Endothelial cell of umbilical vein (primary cell): ENCODE measurements at regions of chr7 and their contacts with region 1.

Region 1: GRCh38 chr7:22110227-22110839 is 164.6 kb upstream of the CDCA7L start:
- DNase-seq: peak; percentile 93
- H3K4me3 ChIP-seq: no peak overlapping the region
- H3K27ac ChIP-seq: peak overlapping the region; percentile 24
- H3K4me1 ChIP-seq: peaks cover 15% of the 10 kb centered on the region
- H3K27me3 ChIP-seq: no peaks in the 10 kb centered on the region
- CTCF ChIP-seq: peak; percentile 65 to 77
- POLR2A ChIP-seq: no peak

Region 2: DNA sequence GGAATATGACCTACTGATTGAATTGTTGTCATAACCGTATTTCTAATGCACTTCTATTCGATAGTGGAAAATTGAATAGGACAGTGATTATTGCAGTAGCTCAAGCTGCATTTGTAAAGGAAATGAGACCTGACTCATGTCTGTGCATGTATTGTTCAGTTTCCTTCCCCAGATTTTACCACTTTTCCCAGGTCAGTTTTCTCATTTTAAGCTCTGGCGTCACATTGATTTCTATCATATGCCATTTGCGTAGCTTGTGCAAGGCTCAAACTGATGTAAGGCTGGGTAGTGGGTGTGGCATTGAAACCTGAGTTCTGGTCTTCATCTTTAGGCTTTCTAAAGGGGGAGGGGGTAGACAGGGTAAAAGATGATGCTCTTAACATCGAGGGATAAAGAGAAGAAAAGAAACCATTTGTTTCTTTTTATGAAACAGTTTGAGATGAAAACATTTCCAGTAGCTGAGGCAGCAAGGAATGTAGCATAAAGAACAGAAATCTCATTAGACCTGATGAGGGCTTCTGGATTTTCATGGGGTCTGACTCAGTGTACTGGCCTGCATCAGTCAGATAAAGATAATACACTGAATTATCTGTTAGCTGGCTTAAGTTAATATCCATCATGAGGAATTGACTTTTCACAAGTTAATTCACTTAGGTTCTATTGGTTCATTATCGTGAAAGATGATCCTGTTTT is 17.6 kb after region 1 on chr7:
- CTCF ChIA-PET with region 1: interaction called, 25 read pairs
- POLR2A ChIA-PET with region 1: interaction called, 4 read pairs
- dilution Hi-C with region 1: no loop called
- intact Hi-C with region 1: loop called (anchors 1 kb)
- DNase-seq: peak; percentile 97
- H3K4me3 ChIP-seq: no peak overlapping the region
- H3K27ac ChIP-seq: peak overlapping the region; percentile 91
- H3K4me1 ChIP-seq: peaks cover 55% of the 10 kb centered on the region
- H3K27me3 ChIP-seq: no peaks in the 10 kb centered on the region
- CTCF ChIP-seq: no peak
- POLR2A ChIP-seq: no peak

Region 3: GRCh38 chr7:22184549-22185199 is 74.3 kb after region 1 on chr7:
- CTCF ChIA-PET with region 1: interaction called, 10 read pairs
- POLR2A ChIA-PET with region 1: no interaction called
- dilution Hi-C with region 1: no loop called
- intact Hi-C with region 1: no loop called
- DNase-seq: no peak
- H3K4me3 ChIP-seq: no peak overlapping the region
- H3K27ac ChIP-seq: no peak overlapping the region
- H3K4me1 ChIP-seq: no peaks in the 10 kb centered on the region
- H3K27me3 ChIP-seq: no peaks in the 10 kb centered on the region
- CTCF ChIP-seq: no peak
- POLR2A ChIP-seq: no peak

Region 4: DNA sequence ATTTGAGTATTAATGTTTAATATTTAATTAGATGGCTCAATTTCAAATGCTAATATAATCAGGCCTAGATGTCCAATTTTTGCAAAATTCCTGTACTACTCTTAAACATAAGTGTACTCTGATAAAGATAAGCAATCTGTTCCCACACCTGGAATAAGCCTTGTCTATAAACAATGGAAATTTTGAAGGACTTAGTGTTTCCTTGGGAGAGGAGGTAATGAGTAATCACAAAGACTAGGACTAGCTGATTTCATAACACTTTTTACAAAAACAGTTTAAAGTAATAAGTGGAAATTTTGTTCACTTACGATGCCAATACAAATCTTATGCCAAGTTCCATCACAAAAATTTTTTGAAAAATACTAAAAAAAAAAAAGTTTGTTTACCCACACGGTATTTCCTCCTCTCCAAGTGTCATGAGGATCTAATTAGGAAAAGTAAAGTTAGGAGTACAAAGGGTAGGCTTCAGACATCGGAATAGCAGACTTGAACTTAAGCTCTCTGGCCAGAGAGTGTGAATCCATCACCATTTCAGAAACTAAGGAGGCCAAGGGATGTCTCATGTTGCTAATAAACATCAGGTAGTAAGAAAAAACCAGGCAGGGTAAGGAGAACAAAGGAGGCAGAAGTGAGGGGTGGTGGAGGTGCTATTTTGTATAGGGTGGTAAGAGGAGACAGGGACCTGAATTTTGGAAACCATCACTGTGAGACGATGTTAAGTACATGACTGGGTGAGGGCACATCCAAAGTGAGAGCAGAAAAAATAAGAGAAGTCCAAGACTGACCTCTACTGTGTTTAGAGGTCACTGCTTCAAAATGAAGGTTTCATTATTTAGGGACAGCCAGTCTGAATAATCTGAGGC is 185.3 kb after region 1 on chr7:
- CTCF ChIA-PET with region 1: interaction called, 88 read pairs
- POLR2A ChIA-PET with region 1: no interaction called
- dilution Hi-C with region 1: no loop called
- intact Hi-C with region 1: loop called (anchors 1 kb)
- DNase-seq: peak; percentile 80
- H3K4me3 ChIP-seq: no peak overlapping the region
- H3K27ac ChIP-seq: peak overlapping the region; percentile 10
- H3K4me1 ChIP-seq: peaks cover 5% of the 10 kb centered on the region
- H3K27me3 ChIP-seq: no peaks in the 10 kb centered on the region
- CTCF ChIP-seq: peak in 1 of 2 donors; percentile 13
- POLR2A ChIP-seq: no peak

Region 5: GRCh38 chr7:22445140-22445743 is 334.9 kb after region 1 on chr7:
- CTCF ChIA-PET with region 1: interaction called, 21 read pairs
- POLR2A ChIA-PET with region 1: no interaction called
- dilution Hi-C with region 1: loop called (anchors 25 kb)
- intact Hi-C with region 1: loop called (anchors 1 kb)
- DNase-seq: peak; percentile 99
- H3K4me3 ChIP-seq: no peak overlapping the region
- H3K27ac ChIP-seq: peak overlapping the region; percentile 92
- H3K4me1 ChIP-seq: peaks cover 50% of the 10 kb centered on the region
- H3K27me3 ChIP-seq: no peaks in the 10 kb centered on the region
- CTCF ChIP-seq: no peak
- POLR2A ChIP-seq: peak; percentile 71

Region 6: DNA sequence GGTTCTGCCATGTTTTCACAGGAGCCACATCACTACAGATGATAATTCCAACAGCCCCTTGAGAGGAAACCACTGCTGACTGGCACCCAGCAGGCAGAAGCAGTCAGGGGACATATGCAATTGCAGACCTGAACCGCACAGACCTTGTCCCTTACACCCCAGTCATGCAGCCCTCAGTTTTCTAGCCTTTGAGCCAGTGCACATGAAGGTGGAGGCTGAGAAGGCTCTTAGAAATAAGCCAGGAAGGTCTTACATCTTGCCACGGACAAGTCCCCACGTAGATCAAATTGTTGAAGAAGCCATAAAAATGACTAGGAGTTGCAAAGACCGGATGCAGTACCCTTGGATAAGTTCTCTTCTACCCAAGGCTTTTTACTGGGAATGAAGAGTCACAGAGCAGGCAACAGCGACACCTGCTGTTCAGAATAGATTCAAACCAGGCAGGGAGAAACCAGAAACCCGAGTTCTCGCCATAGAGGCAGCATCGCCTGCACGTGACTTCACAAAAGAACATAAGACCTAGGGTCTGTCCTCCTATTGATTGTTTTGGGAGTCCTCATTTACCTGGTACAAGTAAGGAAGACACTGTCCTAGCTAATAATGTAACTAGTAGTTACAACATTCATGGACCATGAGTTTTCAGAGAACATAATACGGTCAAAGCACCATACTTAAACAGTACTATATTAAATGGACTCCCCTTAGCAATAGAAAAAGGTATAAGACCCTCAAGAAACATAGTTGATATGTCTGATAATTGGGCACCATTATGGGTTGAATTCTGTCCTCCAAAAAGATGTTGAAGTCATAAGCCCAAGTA is 378.5 kb after region 1 on chr7:
- CTCF ChIA-PET with region 1: interaction called, 81 read pairs
- POLR2A ChIA-PET with region 1: no interaction called
- dilution Hi-C with region 1: no loop called
- intact Hi-C with region 1: loop called (anchors 1 kb)
- DNase-seq: peak; percentile 86
- H3K4me3 ChIP-seq: no peak overlapping the region
- H3K27ac ChIP-seq: peak overlapping the region; percentile 44
- H3K4me1 ChIP-seq: peaks cover 42% of the 10 kb centered on the region
- H3K27me3 ChIP-seq: no peaks in the 10 kb centered on the region
- CTCF ChIP-seq: peak; percentile 74 to 90
- POLR2A ChIP-seq: no peak